HCT116 (cell line): ENCODE measurements at regions of chr20 and their contacts with region 1.

Region 1: DNA sequence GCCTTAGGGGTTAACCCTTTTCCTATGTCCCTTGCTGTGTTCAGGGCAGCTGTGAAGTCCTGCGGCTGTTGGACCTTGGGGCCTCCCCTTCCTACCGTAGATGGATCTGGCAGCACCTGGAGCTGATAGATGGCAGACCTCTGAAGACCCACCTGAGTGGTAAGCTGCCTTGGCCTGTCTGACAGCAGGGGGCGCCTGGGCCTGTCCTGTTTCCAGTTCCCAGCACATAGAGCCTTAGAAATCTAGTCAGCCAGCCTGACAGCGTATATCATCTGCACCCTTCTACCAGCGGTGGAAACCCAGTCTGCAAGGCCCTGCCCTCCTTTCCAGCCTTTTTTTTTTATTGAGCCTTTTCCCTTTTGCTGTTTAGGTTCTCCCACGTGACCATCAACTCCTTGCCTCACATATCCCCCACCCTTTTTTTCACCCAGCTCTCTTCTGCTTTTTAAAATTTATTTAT is 26.6 kb downstream of the CNBD2 start:
- DNase-seq: peak; percentile 84
- ATAC-seq: peak; percentile 95
- H3K4me3 ChIP-seq: no peak overlapping the region
- H3K27ac ChIP-seq: no peak overlapping the region
- H3K4me1 ChIP-seq: peaks cover 2 to 23% of the 10 kb centered on the region in 2 experiments; a peak in 3 of 4 replicates
- H3K27me3 ChIP-seq: no peaks in the 10 kb centered on the region
- CTCF ChIP-seq: peak; percentile 94 to 95 (median 95)
- POLR2A ChIP-seq: no peak
- RAD21 ChIP-seq: peak; percentile 97

Region 2: GRCh38 chr20:35954200-35954906 is 40.7 kb before region 1 on chr20 and contains the start of gene SCAND1:
- CTCF ChIA-PET with region 1: interaction called, 52 read pairs
- POLR2A ChIA-PET with region 1: interaction called, 5 read pairs
- RAD21 ChIA-PET with region 1: no interaction called
- intact Hi-C with region 1: no loop called
- DNase-seq: peak; percentile 96
- ATAC-seq: peak; percentile 92
- H3K4me3 ChIP-seq: peak within 1 kb of the TSS; percentile 96
- H3K27ac ChIP-seq: peak within 1 kb of the TSS; percentile 99
- H3K4me1 ChIP-seq: peaks cover 6 to 29% of the 10 kb centered on the region in 2 experiments; a peak in 3 of 4 replicates
- H3K27me3 ChIP-seq: no peaks in the 10 kb centered on the region
- CTCF ChIP-seq: peak; percentile 91 to 99 (median 95)
- POLR2A ChIP-seq: peak; percentile 30
- RAD21 ChIP-seq: peak; percentile 68
- total RNA-seq, gene SCAND1: 46.2 TPM

Region 3: GRCh38 chr20:36050436-36051317 is 55.7 kb after region 1 on chr20:
- CTCF ChIA-PET with region 1: no interaction called
- POLR2A ChIA-PET with region 1: no interaction called
- RAD21 ChIA-PET with region 1: no interaction called
- intact Hi-C with region 1: loop called (anchors 1 kb)
- DNase-seq: peak; percentile 62
- ATAC-seq: peak; percentile 95
- H3K4me3 ChIP-seq: peak overlapping the region; percentile 77 to 89
- H3K27ac ChIP-seq: peak overlapping the region; percentile 92
- H3K4me1 ChIP-seq: peaks cover 0 to 15% of the 10 kb centered on the region in 2 experiments; a peak in 2 of 4 replicates
- H3K27me3 ChIP-seq: no peaks in the 10 kb centered on the region
- CTCF ChIP-seq: no peak
- POLR2A ChIP-seq: peak; percentile 85
- RAD21 ChIP-seq: no peak

Region 4: GRCh38 chr20:36128463-36129159 is 133.6 kb after region 1 on chr20:
- CTCF ChIA-PET with region 1: interaction called, 12 read pairs
- POLR2A ChIA-PET with region 1: interaction called, 3 read pairs
- RAD21 ChIA-PET with region 1: no interaction called
- intact Hi-C with region 1: no loop called
- DNase-seq: no peak
- ATAC-seq: peak; percentile 71; the same call in 1 of the 2 replicates
- H3K4me3 ChIP-seq: no peak overlapping the region
- H3K27ac ChIP-seq: no peak overlapping the region
- H3K4me1 ChIP-seq: peaks cover 2 to 32% of the 10 kb centered on the region in 2 experiments; a peak in 3 of 4 replicates
- H3K27me3 ChIP-seq: no peaks in the 10 kb centered on the region
- CTCF ChIP-seq: no peak
- POLR2A ChIP-seq: no peak
- RAD21 ChIP-seq: no peak

Region 5: GRCh38 chr20:36154700-36155628 is 159.9 kb after region 1 on chr20 and contains the start of gene EPB41L1:
- CTCF ChIA-PET with region 1: interaction called, 16 read pairs
- POLR2A ChIA-PET with region 1: no interaction called
- RAD21 ChIA-PET with region 1: no interaction called
- intact Hi-C with region 1: no loop called
- DNase-seq: no peak
- ATAC-seq: peak; percentile 44
- H3K4me3 ChIP-seq: peak within 1 kb of the TSS; percentile 53 to 64
- H3K27ac ChIP-seq: peak within 1 kb of the TSS; percentile 44; the same call in 1 of the 2 replicates
- H3K4me1 ChIP-seq: peaks cover 14 to 27% of the 10 kb centered on the region in 2 experiments
- H3K27me3 ChIP-seq: no peaks in the 10 kb centered on the region
- CTCF ChIP-seq: no peak
- POLR2A ChIP-seq: no peak
- RAD21 ChIP-seq: no peak
- total RNA-seq, gene EPB41L1: 42.1 TPM

Region 6: DNA sequence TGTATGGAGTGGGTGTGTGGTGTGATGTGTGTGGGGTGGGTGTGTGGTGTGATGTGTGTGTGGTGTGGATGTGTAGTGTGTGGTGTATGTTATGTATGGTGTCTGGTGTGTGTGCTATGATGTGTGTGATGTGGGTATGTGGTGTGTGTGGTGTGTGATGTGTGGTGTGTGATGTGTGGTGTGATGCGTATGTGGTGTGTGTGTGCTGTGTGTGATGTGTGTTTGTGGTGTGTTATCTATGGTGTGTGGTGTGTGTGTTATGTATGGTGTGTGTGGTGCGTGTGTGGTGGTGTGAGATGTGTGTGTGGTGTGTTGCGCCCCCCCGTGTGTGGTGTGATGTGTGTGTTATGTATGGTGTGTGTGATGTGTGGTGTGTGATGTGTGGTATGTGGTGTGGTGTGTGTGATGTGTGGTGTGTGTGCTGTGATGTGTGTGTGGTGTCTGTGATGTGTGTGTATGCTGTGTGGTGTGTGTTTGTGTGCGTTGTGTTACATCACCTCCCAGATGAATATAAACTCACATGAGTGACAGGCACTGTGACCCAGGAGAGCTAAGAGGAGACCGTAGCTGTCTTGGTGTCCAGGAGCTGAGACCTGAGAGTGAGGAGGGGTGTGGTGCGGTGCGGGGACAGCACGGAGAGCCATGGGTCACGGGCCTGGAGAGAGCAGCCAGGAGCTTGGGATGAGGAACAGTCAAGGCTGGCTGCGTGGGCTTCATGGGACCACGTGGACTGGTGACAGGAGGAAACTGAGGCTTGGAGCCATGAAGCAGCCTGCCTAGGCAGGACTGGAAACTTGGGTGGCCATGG is 319.9 kb after region 1 on chr20:
- CTCF ChIA-PET with region 1: no interaction called
- POLR2A ChIA-PET with region 1: no interaction called
- RAD21 ChIA-PET with region 1: no interaction called
- intact Hi-C with region 1: no loop called
- DNase-seq: no peak
- ATAC-seq: no peak
- H3K4me3 ChIP-seq: no peak overlapping the region
- H3K27ac ChIP-seq: no peak overlapping the region
- H3K4me1 ChIP-seq: no peaks in the 10 kb centered on the region
- H3K27me3 ChIP-seq: peaks cover 4% of the 10 kb centered on the region; the same call in 1 of the 2 replicates
- CTCF ChIP-seq: no peak
- POLR2A ChIP-seq: no peak
- RAD21 ChIP-seq: no peak

Region 7: DNA sequence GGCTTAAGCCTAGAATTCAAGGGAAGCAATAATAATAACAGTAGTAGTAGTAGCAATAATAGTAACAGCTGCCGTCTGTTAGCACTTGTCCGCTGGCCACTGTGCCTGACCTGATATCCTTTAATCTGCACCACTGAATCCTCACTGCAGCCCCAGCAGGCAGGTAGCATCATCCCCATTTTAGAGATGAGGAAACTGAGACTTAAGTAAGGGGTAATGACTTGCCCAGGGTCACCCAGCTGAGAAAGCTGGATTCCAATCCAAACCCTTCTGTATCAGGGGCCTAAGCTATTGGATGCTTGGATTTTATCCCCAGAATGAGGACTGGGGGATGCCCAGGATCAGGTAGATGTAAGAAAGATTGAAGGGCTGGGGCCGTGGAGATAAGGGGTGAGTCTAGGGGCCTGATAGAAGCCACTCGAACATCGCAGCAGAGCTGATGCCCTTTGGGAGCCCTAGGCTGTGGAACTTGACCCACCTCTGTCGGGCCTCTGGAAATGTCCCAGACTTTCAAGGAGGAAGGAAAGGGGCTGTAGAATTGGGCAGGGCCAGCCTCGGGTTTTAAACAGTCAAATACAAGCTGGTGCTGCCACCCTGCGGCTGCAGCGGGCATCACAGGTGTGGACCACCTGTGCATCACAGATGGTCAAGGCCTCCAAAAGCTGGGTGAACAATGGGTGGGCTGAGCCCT is 444.2 kb after region 1 on chr20:
- CTCF ChIA-PET with region 1: interaction called, 11 read pairs
- POLR2A ChIA-PET with region 1: no interaction called
- RAD21 ChIA-PET with region 1: no interaction called
- intact Hi-C with region 1: loop called (anchors 5 kb)
- DNase-seq: peak; percentile 32
- ATAC-seq: peak; percentile 74
- H3K4me3 ChIP-seq: no peak overlapping the region
- H3K27ac ChIP-seq: no peak overlapping the region
- H3K4me1 ChIP-seq: peaks cover 3 to 16% of the 10 kb centered on the region in 2 experiments; a peak in 1 of 4 replicates
- H3K27me3 ChIP-seq: no peaks in the 10 kb centered on the region
- CTCF ChIP-seq: peak; percentile 81 to 97 (median 95)
- POLR2A ChIP-seq: no peak
- RAD21 ChIP-seq: peak; percentile 94

Region 8: DNA sequence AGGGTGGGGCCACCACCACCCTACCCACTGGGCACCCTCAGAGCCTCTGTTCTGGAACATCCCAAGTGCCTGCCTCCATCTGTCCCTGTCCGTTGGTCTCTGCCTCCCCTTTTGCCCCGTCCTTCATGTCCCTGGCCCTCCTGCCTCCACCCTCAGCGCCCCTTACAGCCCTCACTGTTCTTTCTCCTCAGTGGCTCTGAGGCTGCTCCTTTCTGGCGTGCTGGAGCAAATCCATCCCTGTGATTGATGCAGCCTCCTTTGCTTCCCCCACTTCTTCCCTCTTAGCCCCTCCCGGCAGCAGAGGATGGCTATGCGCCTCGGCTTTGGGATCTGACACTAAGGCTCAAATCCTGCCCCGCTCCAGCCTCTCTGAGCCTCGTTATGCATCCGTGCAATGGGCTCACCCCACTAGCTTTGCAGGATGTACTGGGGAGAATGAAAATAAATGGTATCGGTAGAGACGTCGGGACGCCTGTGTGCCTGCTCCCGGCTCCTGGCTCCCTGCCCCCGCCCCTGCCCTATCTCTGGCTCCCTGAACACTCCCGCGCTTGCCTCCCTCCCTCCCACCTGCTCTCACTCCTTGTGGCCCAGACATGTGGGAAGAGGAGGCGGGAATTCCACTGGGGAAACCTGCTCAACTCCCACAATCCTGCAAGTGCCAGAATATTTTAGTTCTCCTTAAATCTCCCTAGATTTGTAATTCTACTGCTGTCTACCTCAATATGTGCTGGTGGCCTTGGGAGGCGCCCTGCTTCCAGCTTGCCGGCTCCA is 1921.0 kb after region 1 on chr20:
- CTCF ChIA-PET with region 1: no interaction called
- POLR2A ChIA-PET with region 1: no interaction called
- RAD21 ChIA-PET with region 1: no interaction called
- intact Hi-C with region 1: no loop called
- DNase-seq: no peak
- ATAC-seq: peak; percentile 72
- H3K4me3 ChIP-seq: no peak overlapping the region
- H3K27ac ChIP-seq: no peak overlapping the region
- H3K4me1 ChIP-seq: no peaks in the 10 kb centered on the region
- H3K27me3 ChIP-seq: peaks cover 13% of the 10 kb centered on the region; the same call in 1 of the 2 replicates
- CTCF ChIP-seq: peak in 2 of 3 experiments; percentile 11 to 31; a peak in 3 of 6 replicates
- POLR2A ChIP-seq: no peak
- RAD21 ChIP-seq: no peak